Upper lobe of right lung (tissue), 1 donor: ENCODE measurements at regions of chr10 and their contacts with region 1.

Region 1: GRCh38 chr10:73647191-73647874 is 6.1 kb upstream of the MYOZ1 start:
- DNase-seq: peak; percentile 79
- ATAC-seq: peak; percentile 70
- H3K4me3 ChIP-seq: peak overlapping the region; percentile 70
- H3K27ac ChIP-seq: peak overlapping the region; percentile 51
- H3K4me1 ChIP-seq: peaks cover 25% of the 10 kb centered on the region
- H3K27me3 ChIP-seq: no peaks in the 10 kb centered on the region
- CTCF ChIP-seq: no peak

Region 2: DNA sequence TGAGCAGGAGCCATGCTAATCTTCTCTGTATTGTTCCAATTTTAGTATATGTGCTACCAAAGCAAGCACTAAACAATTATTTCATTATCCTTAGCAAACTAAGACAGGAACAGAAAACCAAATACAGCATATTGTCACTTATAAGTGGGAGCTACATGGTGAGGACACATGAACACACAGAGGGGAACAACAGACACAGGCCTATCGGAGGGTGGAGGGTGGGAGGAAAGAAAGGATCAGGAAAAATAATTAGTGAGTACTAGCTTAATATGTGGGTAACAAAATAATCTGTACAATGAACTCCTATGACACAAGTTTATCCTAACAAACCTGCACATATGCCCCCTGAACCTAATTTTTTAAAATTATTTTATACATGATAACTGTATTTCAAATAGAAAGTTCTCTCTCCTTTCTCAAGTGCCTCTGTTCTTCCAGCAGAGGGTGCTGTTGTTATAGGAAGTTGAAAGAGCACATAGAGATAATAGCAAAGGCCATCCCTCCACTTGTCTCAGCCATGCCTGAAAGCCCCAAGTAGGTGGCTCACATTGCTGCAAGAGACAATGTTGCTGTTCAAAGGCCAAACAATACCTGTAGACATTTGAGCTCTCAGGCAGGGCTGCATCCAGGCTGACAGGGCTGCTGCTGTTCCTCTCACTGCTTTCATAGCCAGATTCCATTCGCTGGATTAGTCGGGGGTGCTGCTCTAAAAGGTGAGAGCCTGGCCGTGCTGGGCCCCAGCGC is 118.1 kb before region 1 on chr10:
- intact Hi-C with region 1: loop called (anchors 5 kb)
- DNase-seq: no peak
- ATAC-seq: peak; percentile 92
- H3K4me3 ChIP-seq: no peak overlapping the region
- H3K27ac ChIP-seq: no peak overlapping the region
- H3K4me1 ChIP-seq: no peaks in the 10 kb centered on the region
- H3K27me3 ChIP-seq: no peaks in the 10 kb centered on the region
- CTCF ChIP-seq: peak; percentile 89

Region 3: DNA sequence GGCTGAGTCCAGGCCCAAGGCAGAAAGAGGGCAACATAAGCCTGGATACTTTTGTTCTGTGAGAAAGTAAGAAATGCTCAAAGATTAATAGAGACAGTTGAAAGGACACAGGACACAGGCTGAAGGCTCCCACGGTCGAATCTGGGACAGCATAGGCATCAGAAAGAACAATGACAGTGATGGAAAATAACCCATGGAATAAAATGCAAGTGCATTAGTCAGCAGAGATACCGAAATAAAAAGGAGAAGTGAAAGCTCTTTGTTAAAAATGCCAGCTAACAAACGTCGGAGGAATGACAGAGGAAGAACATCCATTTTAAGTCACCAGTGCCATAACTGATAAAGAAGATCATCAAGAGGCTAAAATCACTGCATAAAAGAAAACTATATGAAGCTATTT is 70.2 kb after region 1 on chr10:
- intact Hi-C with region 1: no loop called
- DNase-seq: no peak
- ATAC-seq: peak; percentile 38
- H3K4me3 ChIP-seq: no peak overlapping the region
- H3K27ac ChIP-seq: no peak overlapping the region
- H3K4me1 ChIP-seq: no peaks in the 10 kb centered on the region
- H3K27me3 ChIP-seq: no peaks in the 10 kb centered on the region
- CTCF ChIP-seq: no peak

Region 4: GRCh38 chr10:73837072-73837471 is 189.7 kb after region 1 on chr10:
- intact Hi-C with region 1: no loop called
- DNase-seq: no peak
- ATAC-seq: no peak
- H3K4me3 ChIP-seq: no peak overlapping the region
- H3K27ac ChIP-seq: no peak overlapping the region
- H3K4me1 ChIP-seq: no peaks in the 10 kb centered on the region
- H3K27me3 ChIP-seq: no peaks in the 10 kb centered on the region
- CTCF ChIP-seq: no peak